ENCODE measurements at regions of chr5 and their contacts with region 1.

Region 1: GRCh38 chr5:42950440-42951292 is 89.5 kb downstream of the ANXA2R start:
- DNase-seq: peak; percentile 87

Region 2: GRCh38 chr5:42828671-42829070 is 122.0 kb before region 1 on chr5:
- intact Hi-C with region 1: no loop called
- DNase-seq: no peak

Region 3: DNA sequence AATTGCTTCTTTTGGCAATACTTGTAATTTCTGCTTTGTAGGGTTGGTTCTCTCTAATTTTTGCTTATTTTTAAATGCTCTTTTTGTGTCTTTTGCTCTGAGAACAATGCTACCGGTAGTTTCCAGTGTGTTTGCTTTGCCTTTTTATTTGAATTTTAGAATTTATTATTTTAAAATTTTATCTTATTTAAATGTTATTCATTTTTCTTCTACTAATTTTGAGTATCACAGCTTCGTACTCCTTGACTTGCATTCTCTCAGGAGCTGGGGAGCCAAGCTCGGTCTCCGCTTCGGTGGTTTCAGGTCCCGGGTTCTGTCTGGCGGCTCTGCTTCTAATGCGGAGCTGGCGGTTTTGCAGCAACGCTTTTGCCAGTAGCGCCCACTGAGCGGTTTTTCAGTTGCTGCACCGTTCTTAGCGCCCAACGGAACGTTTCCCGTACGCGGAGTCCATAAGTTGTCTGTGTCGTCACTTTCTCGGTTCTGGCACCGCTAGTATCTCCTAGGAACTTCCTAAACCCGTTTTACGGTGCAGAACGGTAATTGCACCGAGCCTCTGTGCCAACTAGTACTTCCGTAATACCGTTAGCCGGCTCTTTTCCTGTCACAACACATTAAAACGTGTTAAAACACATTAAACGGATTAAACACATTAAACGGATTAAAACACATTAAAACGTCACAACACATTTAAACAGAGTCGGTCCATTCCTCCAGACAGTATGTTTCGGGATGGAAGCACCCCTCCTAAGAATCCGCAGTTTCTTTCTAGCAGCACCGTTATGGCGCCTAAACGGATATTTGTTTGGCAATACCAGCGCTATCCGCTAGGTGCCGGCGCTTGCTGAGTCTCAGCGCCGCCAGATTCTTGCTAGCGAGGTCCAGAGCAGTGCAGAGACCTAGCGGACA is 43.8 kb after region 1 on chr5:
- intact Hi-C with region 1: loop called (anchors 1 to 5 kb)
- DNase-seq: peak; percentile 96

Region 4: DNA sequence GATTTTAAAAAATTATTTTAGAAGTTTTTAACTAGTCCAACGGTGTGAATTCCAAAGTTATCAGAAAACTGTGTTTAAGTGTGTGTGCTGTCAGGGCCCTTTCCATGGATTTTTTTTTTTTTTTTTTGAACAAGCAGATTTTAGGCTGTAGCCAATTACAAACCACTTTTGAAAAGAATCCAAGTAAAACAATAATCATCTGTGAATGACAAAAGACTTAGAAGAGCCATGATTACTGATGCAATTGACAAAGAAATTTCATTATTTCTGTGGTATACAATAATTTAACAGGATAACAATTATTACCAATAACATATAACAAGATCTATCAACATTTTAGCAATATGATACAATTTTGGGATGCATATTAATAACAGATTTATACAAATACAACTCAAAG is 622.4 kb after region 1 on chr5:
- intact Hi-C with region 1: loop called in 1 of 2 experiments (anchors 5 kb)
- DNase-seq: no peak

Measured in posterior vena cava (tissue), 2 donors.